IMR-90 (cell line): ENCODE measurements at regions of chr15 and their contacts with region 1.

Region 1: DNA sequence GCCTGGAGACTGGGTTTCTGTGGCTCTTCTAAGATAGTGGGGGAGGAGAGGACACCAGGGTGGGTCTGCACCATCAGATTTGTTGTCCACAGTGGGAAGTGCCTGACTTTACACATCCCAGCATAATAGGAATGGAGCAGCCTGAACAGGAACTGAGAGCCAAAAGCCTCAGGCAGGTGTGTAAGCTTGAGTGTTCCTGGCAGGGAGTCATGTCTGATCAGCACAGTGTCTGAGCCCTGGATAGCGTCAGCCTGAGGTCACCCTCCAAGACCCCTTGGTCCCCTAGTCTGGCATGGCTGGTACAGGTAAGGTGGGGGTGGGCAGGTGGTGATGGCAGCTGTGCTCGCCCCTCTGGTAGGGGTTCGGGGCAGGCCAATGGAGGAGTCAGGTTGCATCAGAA is 20.2 kb downstream of the INSYN1 start:
- DNase-seq: no peak
- ATAC-seq: no peak
- H3K4me3 ChIP-seq: no peak overlapping the region
- H3K27ac ChIP-seq: no peak overlapping the region
- H3K4me1 ChIP-seq: no peaks in the 10 kb centered on the region
- H3K27me3 ChIP-seq: peaks cover 29% of the 10 kb centered on the region
- CTCF ChIP-seq: no peak
- POLR2A ChIP-seq: no peak
- RAD21 ChIP-seq: no peak

Region 2: GRCh38 chr15:73573572-73573971 is 159.4 kb before region 1 on chr15:
- CTCF ChIA-PET with region 1: no interaction called
- POLR2A ChIA-PET with region 1: no interaction called
- dilution Hi-C with region 1: no loop called
- in situ Hi-C with region 1: no loop called
- intact Hi-C with region 1: no loop called
- DNase-seq: peak; percentile 97
- ATAC-seq: peak; percentile 77
- H3K4me3 ChIP-seq: no peak overlapping the region
- H3K27ac ChIP-seq: peak overlapping the region; percentile 23; the same call in 1 of the 2 replicates
- H3K4me1 ChIP-seq: peaks cover 5% of the 10 kb centered on the region
- H3K27me3 ChIP-seq: no peaks in the 10 kb centered on the region
- CTCF ChIP-seq: no peak
- POLR2A ChIP-seq: no peak
- RAD21 ChIP-seq: no peak; the same call in 1 of the 2 replicates

Region 3: DNA sequence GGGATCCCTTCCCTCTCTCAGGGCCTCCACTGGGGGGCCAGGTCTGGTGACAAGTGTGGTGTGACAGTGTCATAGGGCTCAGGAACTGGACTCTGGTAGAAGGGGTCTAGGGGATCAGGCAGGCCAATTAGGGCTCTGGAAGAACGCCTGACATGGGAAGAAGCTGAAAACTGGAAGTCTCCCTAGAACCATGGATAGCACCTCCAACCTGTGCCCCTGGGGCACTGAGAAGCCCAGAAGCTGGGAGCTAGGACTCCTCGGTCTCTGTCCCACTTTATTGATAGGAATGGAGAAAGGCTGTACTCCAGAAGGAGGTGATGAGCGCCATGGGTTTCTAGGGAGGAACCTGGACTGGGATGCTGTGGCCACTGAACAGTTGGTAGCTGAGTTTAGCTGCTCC is 10.5 kb before region 1 on chr15:
- CTCF ChIA-PET with region 1: no interaction called
- POLR2A ChIA-PET with region 1: interaction called, 12 read pairs
- dilution Hi-C with region 1: no loop called
- in situ Hi-C with region 1: no loop called
- intact Hi-C with region 1: no loop called
- DNase-seq: no peak
- ATAC-seq: no peak
- H3K4me3 ChIP-seq: no peak overlapping the region
- H3K27ac ChIP-seq: no peak overlapping the region
- H3K4me1 ChIP-seq: no peaks in the 10 kb centered on the region; the same call in 1 of the 2 replicates
- H3K27me3 ChIP-seq: peaks cover 46% of the 10 kb centered on the region
- CTCF ChIP-seq: no peak
- POLR2A ChIP-seq: no peak
- RAD21 ChIP-seq: no peak